Heart left ventricle (tissue), 16 donors: ENCODE measurements at regions of chr3 and their contacts with region 1.

Region 1: GRCh38 chr3:5840056-5840455 is 652.5 kb downstream of the EDEM1 start:
- DNase-seq: no peak
- ATAC-seq: no peak
- H3K4me3 ChIP-seq: no peak overlapping the region
- H3K27ac ChIP-seq: no peak overlapping the region
- H3K4me1 ChIP-seq: no peaks in the 10 kb centered on the region
- H3K27me3 ChIP-seq: no peaks in the 10 kb centered on the region
- CTCF ChIP-seq: no peak
- POLR2A ChIP-seq: no peak

Region 2: DNA sequence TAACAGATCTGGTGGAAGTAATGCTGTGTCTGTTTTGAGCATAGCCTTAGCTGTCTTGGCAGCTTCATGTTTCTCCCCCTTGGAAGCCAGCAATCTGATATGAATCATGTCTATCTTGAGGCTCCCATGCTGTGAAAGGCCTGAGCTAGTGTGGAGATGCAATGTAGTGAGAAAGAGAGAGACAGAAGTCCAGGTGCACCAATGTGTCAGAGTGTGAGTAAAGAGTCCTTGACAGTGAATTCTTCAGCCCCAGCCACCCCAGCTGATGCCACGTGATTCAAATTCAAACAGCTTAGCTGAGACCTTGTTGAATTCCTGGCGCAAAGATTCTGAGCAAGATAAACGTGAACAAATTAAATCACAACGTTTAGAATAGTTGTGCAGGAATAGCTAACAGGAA is 51.7 kb after region 1 on chr3:
- intact Hi-C with region 1: loop called in 2 of 10 experiments (anchors 10 kb)
- DNase-seq: no peak
- ATAC-seq: no peak
- H3K4me3 ChIP-seq: no peak overlapping the region
- H3K27ac ChIP-seq: no peak overlapping the region
- H3K4me1 ChIP-seq: no peaks in the 10 kb centered on the region
- H3K27me3 ChIP-seq: no peaks in the 10 kb centered on the region
- CTCF ChIP-seq: no peak
- POLR2A ChIP-seq: no peak